Posterior vena cava (tissue), 2 donors: ENCODE measurements at regions of chr6 and their contacts with region 1.

Region 1: GRCh38 chr6:107917451-107918375 is 40.3 kb downstream of the SEC63 start:
- DNase-seq: no peak

Region 2: DNA sequence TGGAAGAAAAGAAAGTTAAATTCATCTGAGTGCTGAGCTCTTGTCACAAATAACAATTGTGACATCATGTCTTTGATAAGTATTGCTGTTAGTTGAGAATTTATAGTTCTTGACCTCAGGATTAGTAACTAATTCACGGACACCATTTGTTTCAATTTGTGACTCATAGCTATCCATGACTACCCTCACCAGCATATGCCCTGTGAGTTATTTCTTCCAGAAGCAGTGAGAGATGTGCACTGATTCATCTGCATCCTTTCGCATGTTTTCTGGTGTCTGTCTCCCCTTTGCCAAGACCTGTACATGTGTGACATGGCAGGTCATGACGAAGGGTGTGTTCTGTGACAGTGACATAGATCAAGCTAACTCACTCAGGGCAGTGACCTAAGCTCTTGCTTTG is 340.9 kb before region 1 on chr6:
- intact Hi-C with region 1: loop called in 1 of 2 experiments (anchors 10 kb)
- DNase-seq: no peak

Region 3: GRCh38 chr6:108052706-108053105 is 135.0 kb after region 1 on chr6:
- intact Hi-C with region 1: no loop called
- DNase-seq: no peak